B cell (primary cell): ENCODE measurements at regions of chr3 and their contacts with region 1.

Region 1: GRCh38 chr3:66276705-66277274 is 56.0 kb downstream of the SLC25A26 start:
- DNase-seq: peak; percentile 71
- ATAC-seq: peak; percentile 45
- H3K4me3 ChIP-seq: no peak overlapping the region
- H3K4me3 Mint-ChIP-seq: no peak overlapping the region
- H3K27ac ChIP-seq: no peak overlapping the region
- H3K27ac Mint-ChIP-seq: no peak overlapping the region
- H3K4me1 ChIP-seq: no peaks in the 10 kb centered on the region
- H3K4me1 Mint-ChIP-seq: no peaks in the 10 kb centered on the region
- H3K27me3 ChIP-seq: no peaks in the 10 kb centered on the region
- H3K27me3 Mint-ChIP-seq: no peaks in the 10 kb centered on the region
- CTCF ChIP-seq: peak; percentile 87

Region 2: DNA sequence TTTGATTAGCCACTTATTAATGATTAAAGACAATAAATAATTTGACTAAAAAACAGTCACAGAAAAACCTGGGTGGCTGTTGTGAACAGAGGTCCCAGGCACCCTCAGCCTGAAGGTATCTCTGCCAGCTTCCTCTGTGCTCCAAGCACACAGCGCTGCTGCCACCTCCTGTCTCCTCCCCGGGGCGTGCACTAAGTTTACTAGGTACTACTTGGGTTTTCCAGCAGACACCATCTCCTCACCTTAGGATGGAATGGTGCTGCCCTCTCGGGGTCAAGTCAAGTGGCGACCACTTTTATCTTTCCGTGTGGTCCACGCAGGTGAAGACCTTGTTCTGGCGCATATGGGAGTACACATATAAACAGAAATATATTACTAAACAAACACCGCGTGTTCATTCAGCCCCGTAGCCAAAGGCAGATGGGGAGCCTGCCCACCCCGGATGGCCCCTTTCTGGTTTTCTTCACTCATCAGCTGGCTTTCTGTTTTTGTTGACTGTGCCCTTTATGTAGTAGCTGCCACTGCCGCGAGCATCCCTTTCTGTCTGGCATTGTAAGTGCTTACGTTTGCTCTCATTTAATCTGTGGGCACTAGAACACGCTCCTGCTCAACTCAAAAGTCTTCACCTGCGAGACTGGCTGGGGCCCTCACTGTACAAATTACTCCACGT is 96.0 kb after region 1 on chr3:
- CTCF ChIA-PET with region 1: interaction called, 10 read pairs
- POLR2A ChIA-PET with region 1: no interaction called
- intact Hi-C with region 1: loop called (anchors 1 kb)
- DNase-seq: no peak
- ATAC-seq: peak; percentile 39
- H3K4me3 ChIP-seq: no peak overlapping the region
- H3K4me3 Mint-ChIP-seq: no peak overlapping the region
- H3K27ac ChIP-seq: no peak overlapping the region
- H3K27ac Mint-ChIP-seq: no peak overlapping the region
- H3K4me1 ChIP-seq: no peaks in the 10 kb centered on the region
- H3K4me1 Mint-ChIP-seq: no peaks in the 10 kb centered on the region
- H3K27me3 ChIP-seq: no peaks in the 10 kb centered on the region
- H3K27me3 Mint-ChIP-seq: no peaks in the 10 kb centered on the region
- CTCF ChIP-seq: no peak

Region 3: DNA sequence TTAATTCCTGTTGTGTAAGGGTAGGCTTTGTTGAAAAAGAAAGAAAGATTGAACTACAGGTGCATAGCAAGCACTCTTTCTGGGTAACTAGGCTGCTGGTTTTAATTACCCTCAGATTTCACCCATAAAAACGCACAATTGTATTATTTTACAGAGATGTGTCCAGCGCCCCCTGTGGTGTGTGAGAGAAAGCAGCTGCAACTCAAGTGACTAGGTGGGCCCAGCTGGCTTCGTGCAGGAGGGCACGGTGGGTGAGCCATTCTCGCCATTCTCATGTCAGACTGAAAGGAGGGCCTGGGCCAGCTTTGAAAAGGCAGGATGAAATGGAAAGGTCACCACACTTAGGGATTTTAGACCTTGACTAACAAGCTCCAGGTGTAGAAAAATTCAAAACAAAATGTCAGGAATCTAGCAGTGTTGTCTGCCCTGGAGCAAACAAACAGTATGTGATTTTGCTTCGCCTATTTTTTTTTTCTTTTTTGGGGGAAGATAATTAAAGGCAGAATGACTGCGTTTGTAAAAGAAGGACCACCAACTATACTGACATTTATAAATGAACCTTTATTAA is 101.5 kb after region 1 on chr3:
- CTCF ChIA-PET with region 1: interaction called, 10 read pairs
- POLR2A ChIA-PET with region 1: no interaction called
- intact Hi-C with region 1: no loop called
- DNase-seq: peak; percentile 25
- ATAC-seq: no peak
- H3K4me3 ChIP-seq: no peak overlapping the region
- H3K4me3 Mint-ChIP-seq: no peak overlapping the region
- H3K27ac ChIP-seq: no peak overlapping the region
- H3K27ac Mint-ChIP-seq: no peak overlapping the region
- H3K4me1 ChIP-seq: no peaks in the 10 kb centered on the region
- H3K4me1 Mint-ChIP-seq: no peaks in the 10 kb centered on the region
- H3K27me3 ChIP-seq: no peaks in the 10 kb centered on the region
- H3K27me3 Mint-ChIP-seq: no peaks in the 10 kb centered on the region
- CTCF ChIP-seq: peak; percentile 70

Region 4: GRCh38 chr3:66394019-66394752 is 117.4 kb after region 1 on chr3:
- CTCF ChIA-PET with region 1: no interaction called
- POLR2A ChIA-PET with region 1: no interaction called
- intact Hi-C with region 1: no loop called
- DNase-seq: peak; percentile 79
- ATAC-seq: peak; percentile 88
- H3K4me3 ChIP-seq: peak overlapping the region; percentile 37 to 71 (median 58)
- H3K4me3 Mint-ChIP-seq: peak overlapping the region; percentile 92
- H3K27ac ChIP-seq: peak overlapping the region; percentile 66 to 72
- H3K27ac Mint-ChIP-seq: peak overlapping the region; percentile 92
- H3K4me1 ChIP-seq: peaks cover 35 to 48% of the 10 kb centered on the region in 2 donors
- H3K4me1 Mint-ChIP-seq: peaks cover 53% of the 10 kb centered on the region
- H3K27me3 ChIP-seq: no peaks in the 10 kb centered on the region
- H3K27me3 Mint-ChIP-seq: no peaks in the 10 kb centered on the region
- CTCF ChIP-seq: no peak

Region 5: DNA sequence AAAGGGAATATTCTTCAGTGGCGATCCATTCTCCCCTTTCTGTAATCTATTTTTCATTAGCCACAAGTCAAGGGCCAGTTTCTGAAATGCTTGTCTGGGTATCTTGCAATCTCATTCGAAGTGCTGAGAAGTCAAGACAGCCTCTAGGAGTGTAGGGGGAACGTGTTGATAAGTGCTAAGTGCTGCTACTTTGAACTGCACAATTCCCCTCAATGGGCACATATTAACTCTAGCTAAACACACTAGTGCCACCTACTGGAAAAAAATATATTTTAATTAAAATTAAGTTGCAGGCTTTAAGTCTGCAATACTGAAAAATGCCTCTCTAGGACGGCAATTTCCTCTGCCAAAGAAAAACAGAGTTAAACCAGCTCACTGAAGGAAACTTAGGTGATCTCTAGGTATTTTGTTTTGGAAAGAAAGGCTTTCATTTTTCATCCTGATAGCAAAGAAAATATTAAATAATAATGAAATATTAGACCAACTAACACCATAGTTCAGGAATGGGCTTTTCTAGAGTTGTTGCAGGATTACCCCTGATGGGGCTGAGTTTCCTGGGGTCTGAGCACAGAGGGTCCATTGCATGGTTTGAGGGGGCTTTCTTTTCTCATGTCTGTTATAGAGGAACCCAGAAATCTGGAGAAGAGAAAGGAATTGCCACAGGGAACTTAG is 539.4 kb after region 1 on chr3:
- CTCF ChIA-PET with region 1: interaction called, 80 read pairs
- POLR2A ChIA-PET with region 1: no interaction called
- intact Hi-C with region 1: loop called (anchors 1 kb)
- DNase-seq: peak; percentile 52
- ATAC-seq: peak; percentile 47
- H3K4me3 ChIP-seq: no peak overlapping the region
- H3K4me3 Mint-ChIP-seq: no peak overlapping the region
- H3K27ac ChIP-seq: no peak overlapping the region
- H3K27ac Mint-ChIP-seq: no peak overlapping the region
- H3K4me1 ChIP-seq: no peaks in the 10 kb centered on the region
- H3K4me1 Mint-ChIP-seq: no peaks in the 10 kb centered on the region
- H3K27me3 ChIP-seq: peaks cover 0 to 6% (median 2%) of the 10 kb centered on the region in 4 experiments
- H3K27me3 Mint-ChIP-seq: peaks cover 15% of the 10 kb centered on the region
- CTCF ChIP-seq: peak; percentile 85

Region 6: DNA sequence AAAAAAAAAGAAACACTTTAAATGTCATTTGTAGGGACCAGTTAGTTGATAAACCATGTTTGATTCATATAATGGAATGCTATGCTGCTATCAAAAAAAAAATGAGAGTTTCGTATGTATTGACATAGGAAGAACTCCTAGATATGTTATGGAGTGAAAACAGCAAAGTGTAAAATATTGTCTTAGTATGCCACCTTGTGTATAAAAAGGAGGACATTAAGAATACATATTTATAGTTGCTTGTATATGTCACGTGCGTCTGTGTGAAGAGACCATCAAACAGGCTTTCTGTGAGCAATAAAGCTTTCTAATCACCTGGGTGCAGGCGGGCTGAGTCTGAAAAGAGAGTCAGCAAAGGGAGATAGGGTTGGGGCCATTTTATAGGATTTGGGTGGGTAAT is 760.8 kb after region 1 on chr3:
- CTCF ChIA-PET with region 1: no interaction called
- POLR2A ChIA-PET with region 1: no interaction called
- intact Hi-C with region 1: no loop called
- DNase-seq: peak; percentile 42
- ATAC-seq: no peak
- H3K4me3 ChIP-seq: no peak overlapping the region
- H3K4me3 Mint-ChIP-seq: no peak overlapping the region
- H3K27ac ChIP-seq: no peak overlapping the region
- H3K27ac Mint-ChIP-seq: no peak overlapping the region
- H3K4me1 ChIP-seq: peaks cover 4 to 6% of the 10 kb centered on the region in 2 donors
- H3K4me1 Mint-ChIP-seq: peaks cover 6% of the 10 kb centered on the region
- H3K27me3 ChIP-seq: no peaks in the 10 kb centered on the region
- H3K27me3 Mint-ChIP-seq: no peaks in the 10 kb centered on the region
- CTCF ChIP-seq: no peak